ENCODE measurements at regions of chr5 and their contacts with region 1.

Region 1: GRCh38 chr5:160675988-160676387 is 176.0 kb downstream of the ATP10B start:
- DNase-seq: peak in 1 of 10 donors; percentile 16

Region 2: GRCh38 chr5:160774666-160775315 is 98.8 kb after region 1 on chr5:
- intact Hi-C with region 1: no loop called
- DNase-seq: peak in 5 of 10 donors; percentile 31 to 85 (median 52)

Region 3: DNA sequence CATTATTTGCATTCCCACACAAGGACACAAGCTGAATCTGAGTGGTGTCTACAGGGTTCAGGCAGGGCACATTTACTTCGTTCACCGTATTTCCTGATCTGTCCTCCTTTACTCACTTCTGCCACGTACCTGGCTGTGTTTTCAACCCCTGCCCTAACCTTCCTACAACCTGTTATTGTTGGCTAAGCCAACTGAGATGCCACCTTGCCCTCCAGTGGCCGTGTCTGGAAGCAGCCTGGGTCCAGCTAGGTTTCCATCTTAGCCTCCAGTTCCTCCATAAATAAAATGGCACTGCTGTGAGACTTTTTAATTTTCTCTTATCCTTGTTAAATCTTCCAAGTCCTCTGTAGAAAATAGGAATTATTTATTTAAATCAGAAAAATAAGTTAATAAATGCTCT is 111.3 kb after region 1 on chr5:
- intact Hi-C with region 1: loop called (anchors 5 kb)
- DNase-seq: peak in 2 of 10 donors; percentile 63 to 79

Region 4: GRCh38 chr5:160852049-160852448 is 176.1 kb after region 1 on chr5 and contains the start of gene ATP10B:
- intact Hi-C with region 1: loop called (anchors 10 kb)
- DNase-seq: peak in 4 of 10 donors; percentile 10 to 80 (median 28)

Region 5: GRCh38 chr5:161400583-161400982 is 724.6 kb after region 1 on chr5:
- intact Hi-C with region 1: no loop called
- DNase-seq: no peak

Measured in posterior cingulate gyrus (tissue), 11 donors.